CD8-positive, alpha-beta T cell (primary cell): ENCODE measurements at regions of chr11 and their contacts with region 1.

Region 1: DNA sequence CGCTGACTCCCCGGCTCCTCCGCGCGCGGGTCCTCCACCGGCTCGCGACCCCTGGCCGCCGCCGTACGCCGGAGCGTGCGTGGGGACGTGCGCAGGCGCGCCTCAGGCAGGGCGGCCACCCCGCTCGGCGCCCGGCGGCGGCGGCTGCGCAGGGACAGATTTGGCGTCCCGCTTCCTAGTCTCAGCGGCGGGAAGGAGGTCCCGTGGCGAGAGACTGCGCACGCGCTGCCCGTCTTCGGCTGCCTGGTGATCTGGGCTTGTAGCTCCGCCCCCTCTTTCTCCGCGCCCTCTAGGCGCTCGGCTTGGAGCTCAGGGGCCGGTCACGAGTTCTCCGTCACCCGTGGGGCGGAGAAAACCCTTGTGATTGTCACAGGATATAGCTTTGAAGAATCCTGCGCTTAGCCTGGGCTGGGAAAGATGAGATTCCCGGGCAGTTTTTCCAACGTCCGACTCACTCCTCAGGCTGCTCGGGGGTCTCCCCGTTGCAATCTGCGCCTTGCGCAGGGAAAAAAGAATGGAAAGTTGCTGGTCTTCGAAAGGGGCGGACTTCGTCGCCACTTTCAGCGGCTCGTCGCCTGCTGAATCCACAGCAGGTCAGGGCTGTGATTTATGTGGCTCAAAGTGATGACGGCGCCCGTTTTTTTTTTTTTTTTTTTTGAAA is at the start of gene PATL1:
- DNase-seq: peak; percentile 98 to 100 (median 99)
- ATAC-seq: peak; percentile 88
- H3K4me3 ChIP-seq: peak within 1 kb of the TSS; percentile 79 to 98
- H3K4me3 Mint-ChIP-seq: peak within 1 kb of the TSS; percentile 98
- H3K27ac ChIP-seq: peak within 1 kb of the TSS; percentile 98 to 99
- H3K27ac Mint-ChIP-seq: peak within 1 kb of the TSS; percentile 100
- H3K4me1 ChIP-seq: peaks cover 22% of the 10 kb centered on the region
- H3K4me1 Mint-ChIP-seq: peaks cover 43% of the 10 kb centered on the region
- H3K27me3 ChIP-seq: no peaks in the 10 kb centered on the region
- H3K27me3 Mint-ChIP-seq: no peaks in the 10 kb centered on the region
- CTCF ChIP-seq: no peak
- total RNA-seq, gene PATL1: 59.5 to 59.6 TPM

Region 2: DNA sequence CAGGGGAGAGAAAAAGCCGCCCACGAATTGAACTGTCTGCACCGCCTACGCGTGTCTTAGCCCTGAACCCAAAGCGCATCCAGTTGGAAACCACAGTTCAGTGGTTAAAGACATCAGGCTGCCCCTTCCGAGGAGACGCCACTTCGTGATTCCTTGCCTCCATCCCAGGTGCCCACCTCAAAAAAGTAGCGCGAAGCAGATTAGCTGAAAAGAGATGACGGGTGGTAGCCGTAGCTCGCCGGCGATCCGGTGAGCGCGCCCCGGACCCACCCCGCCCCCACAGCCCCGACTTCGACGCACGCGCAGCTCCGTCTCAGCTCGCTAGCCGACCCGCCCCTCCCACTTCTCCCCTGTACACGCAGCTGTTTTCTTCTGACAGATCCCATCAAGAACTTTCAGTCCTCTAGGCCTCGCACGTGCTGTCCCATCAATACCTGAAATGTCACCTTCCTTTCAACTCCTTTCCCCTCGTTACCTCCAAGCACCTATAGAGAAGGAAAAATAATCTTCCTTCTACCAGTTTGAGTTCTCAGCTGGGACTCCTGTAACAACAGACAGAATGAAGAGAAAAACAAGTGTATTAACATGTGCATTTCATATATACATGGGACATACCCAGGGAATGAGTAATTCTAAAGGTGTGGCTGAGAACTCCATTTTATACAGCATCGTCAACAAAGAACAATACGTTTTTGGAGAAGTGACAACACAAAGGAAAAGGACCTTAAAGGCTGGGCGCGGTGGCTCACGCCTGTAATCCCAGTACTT is 108.2 kb before region 1 on chr11:
- CTCF ChIA-PET with region 1: interaction called, 7 read pairs
- POLR2A ChIA-PET with region 1: interaction called, 9 read pairs
- intact Hi-C with region 1: loop called in 1 of 2 experiments (anchors 5 kb)
- DNase-seq: peak; percentile 64 to 91 (median 82)
- ATAC-seq: peak; percentile 74
- H3K4me3 ChIP-seq: peak overlapping the region; percentile 73 to 80
- H3K4me3 Mint-ChIP-seq: peak overlapping the region; percentile 96
- H3K27ac ChIP-seq: peak overlapping the region; percentile 53 to 60
- H3K27ac Mint-ChIP-seq: peak overlapping the region; percentile 94
- H3K4me1 ChIP-seq: peaks cover 20% of the 10 kb centered on the region
- H3K4me1 Mint-ChIP-seq: peaks cover 35% of the 10 kb centered on the region
- H3K27me3 ChIP-seq: no peaks in the 10 kb centered on the region
- H3K27me3 Mint-ChIP-seq: no peaks in the 10 kb centered on the region
- CTCF ChIP-seq: no peak

Region 3: DNA sequence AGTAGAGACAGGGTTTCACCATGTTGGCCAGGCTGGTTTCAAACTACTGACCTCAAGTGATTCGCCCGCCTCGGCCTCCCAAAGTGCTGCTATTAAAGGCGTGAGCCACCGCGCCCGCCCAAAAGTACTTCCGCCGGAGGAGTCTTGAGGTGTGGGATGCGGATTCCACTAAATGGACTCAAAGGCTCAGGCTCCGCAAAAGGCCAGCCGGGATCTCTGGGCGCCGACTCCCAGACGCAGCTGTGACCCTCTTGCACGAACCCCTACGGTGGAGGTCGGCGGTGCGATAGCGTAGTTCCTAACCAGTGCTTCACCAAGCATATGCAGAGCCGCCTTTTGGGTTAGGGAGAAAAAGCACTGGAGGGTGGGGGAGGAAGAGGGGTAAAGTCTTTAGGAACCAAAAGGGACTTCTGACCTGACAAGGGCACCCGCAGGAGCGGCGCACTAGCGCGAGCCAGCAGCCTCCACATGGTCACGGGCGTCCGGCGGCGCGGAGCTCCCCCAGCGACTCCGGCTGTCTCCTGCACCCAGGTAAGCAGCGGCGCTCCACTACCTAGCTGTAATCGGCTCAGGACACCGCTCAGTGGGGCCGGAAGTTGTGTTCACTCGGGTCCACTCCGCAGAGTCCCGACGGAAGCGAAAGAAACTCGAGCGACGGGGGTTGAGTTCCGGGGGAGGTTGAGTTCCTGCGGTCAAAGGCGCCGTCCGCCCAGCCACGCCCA is 141.3 kb after region 1 on chr11 and contains the start of gene MRPL16:
- CTCF ChIA-PET with region 1: no interaction called
- POLR2A ChIA-PET with region 1: interaction called, 10 read pairs
- intact Hi-C with region 1: loop called (anchors 1 to 2 kb)
- DNase-seq: peak; percentile 81 to 95 (median 91)
- ATAC-seq: peak; percentile 99
- H3K4me3 ChIP-seq: peak within 1 kb of the TSS; percentile 97 to 99
- H3K4me3 Mint-ChIP-seq: peak within 1 kb of the TSS; percentile 91
- H3K27ac ChIP-seq: peak within 1 kb of the TSS; percentile 73 to 87
- H3K27ac Mint-ChIP-seq: peak within 1 kb of the TSS; percentile 89
- H3K4me1 ChIP-seq: peaks cover 18% of the 10 kb centered on the region
- H3K4me1 Mint-ChIP-seq: peaks cover 23% of the 10 kb centered on the region
- H3K27me3 ChIP-seq: no peaks in the 10 kb centered on the region
- H3K27me3 Mint-ChIP-seq: peaks cover 4% of the 10 kb centered on the region
- CTCF ChIP-seq: peak; percentile 35
- total RNA-seq, gene MRPL16: 26.5 to 27.8 TPM